ENCODE measurements at regions of chr2 and their contacts with region 1.

Region 1: DNA sequence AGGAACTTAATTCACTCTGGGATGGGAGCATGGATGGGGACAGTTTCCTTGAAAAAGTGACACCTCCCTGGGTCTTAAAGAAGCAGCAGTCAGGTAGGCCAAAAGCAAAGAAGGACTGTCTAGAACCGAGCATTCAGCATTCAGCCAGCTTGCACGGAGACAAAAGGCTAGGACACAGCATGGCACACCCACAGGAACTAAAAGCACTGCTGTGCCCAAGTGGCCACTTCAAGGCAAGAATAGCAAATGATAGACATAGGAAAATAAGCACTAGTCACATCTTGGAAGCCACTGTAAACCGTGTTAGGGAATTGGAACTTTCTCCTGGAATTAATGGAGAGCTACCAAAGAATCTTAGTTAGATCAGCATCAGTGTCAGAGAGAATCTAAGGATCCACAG is 47.0 kb downstream of the LRP2 start:
- DNase-seq: no peak
- H3K4me3 ChIP-seq: no peak overlapping the region
- H3K27ac ChIP-seq: no peak overlapping the region
- H3K4me1 ChIP-seq: no peaks in the 10 kb centered on the region
- H3K27me3 ChIP-seq: peaks cover 0 to 6% of the 10 kb centered on the region in 2 donors
- CTCF ChIP-seq: no peak

Region 2: DNA sequence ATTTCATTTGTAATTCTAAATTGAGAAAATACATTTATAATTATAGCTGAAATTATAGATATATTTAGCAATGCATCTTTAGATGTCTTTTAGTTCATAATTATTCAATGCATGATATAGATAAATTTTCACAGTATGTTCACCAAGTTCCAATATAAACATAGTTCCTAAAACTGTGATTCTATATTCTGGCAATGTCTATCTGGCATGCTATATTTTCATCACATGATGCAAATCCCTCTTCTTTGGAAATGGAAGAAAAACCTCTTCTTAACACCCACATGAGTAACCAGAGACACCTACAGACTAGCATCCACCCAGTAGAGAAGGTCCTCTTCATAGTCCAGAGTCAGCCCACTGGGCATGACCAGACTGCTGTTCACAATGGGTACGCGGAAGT is 110.2 kb before region 1 on chr2:
- intact Hi-C with region 1: loop called (anchors 5 kb)
- DNase-seq: no peak
- H3K4me3 ChIP-seq: no peak overlapping the region
- H3K27ac ChIP-seq: no peak overlapping the region
- H3K4me1 ChIP-seq: no peaks in the 10 kb centered on the region
- H3K27me3 ChIP-seq: no peaks in the 10 kb centered on the region
- CTCF ChIP-seq: no peak